ENCODE measurements at regions of chr2 and their contacts with region 1.

Region 1: DNA sequence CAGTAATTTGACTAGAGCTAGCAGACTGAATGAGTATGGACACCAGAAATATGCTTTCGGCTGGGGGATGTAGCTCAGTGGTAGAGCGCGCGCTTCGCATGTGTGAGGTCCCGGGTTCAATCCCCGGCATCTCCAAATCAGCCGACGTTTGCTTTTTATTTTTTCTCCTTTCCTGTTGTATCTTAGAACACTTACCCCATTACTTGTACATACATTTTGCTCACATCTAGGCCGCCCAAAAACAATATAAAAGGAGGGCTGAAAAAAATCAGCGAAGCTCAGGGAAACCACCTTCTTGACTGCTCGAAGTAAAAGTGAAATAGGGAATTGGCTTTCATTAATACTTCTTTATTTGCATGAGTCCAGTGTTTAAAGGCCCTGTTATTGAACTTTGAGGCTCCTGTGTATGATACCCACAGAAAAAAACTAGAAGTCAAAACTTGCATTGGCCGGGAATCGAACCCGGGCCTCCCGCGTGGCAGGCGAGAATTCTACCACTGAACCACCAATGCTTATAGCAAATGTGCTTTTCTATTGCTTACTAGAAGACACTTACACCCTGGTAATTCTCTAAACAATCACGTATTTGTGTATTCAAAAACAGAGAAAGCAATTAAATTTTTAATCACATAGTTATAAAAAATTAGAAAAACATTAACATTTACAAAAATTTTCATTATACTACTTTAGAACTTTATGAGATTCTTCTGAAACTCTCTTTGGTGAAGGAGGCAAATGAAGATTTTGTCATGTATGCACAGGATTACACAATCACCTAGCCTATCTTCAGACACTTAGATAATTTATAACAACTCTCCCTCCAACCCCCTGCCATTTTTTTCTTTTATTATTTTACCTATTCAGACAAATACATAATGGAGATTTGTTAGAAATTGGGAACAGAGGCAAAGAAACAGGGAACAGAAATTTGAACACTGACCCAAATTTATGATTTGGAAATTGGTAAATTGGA is 35.2 kb upstream of the GPD2 start:
- DNase-seq: peak; percentile 75
- H3K4me3 ChIP-seq: peak overlapping the region; percentile 89
- H3K27ac ChIP-seq: peak overlapping the region; percentile 66
- H3K4me1 ChIP-seq: peaks cover 9% of the 10 kb centered on the region
- CTCF ChIP-seq: no peak

Region 2: DNA sequence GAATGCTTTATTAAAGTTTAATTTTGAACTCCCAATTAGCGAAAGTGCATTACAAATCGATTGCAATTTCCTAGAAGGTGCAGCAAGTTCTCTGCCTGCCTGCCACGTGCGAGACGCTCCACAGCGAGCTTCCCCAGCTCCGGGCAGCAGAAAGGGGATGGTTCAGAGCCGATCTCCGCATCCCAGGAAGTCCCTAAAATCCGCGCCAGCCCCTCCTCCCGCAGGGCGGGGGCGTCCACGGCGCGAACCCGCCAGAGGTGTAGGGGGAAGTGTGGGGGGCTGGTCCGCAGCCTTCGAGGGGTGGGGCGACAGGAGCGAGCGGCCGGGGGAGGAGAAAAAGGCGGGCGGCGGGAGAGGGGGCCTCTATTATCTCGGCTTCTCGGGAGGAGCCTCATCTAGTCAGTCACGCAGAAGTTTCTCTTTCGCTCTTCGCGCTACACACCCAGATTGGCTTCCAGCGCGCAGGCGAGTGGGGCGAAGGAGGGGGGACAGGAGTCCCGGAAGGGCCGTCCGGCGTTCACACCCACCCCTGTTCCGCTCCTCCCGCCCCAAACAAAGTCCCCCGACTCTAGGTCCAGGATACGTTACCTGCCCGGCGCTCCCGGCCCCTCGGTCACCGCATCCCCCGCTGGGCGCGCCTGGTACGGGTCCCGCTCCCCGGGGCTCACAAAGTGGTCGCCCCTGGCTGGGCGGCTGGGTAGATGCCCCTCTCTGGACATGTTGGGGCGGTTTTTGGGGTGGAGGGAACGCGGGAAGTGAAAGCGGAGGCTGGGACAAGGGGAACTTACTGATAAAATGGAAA is 59.3 kb before region 1 on chr2:
- CTCF ChIA-PET with region 1: no interaction called
- POLR2A ChIA-PET with region 1: no interaction called
- intact Hi-C with region 1: loop called (anchors 2 kb)
- DNase-seq: peak; percentile 28
- H3K4me3 ChIP-seq: peak overlapping the region; percentile 77
- H3K27ac ChIP-seq: no peak overlapping the region
- H3K4me1 ChIP-seq: peaks cover 14% of the 10 kb centered on the region
- CTCF ChIP-seq: no peak

Region 3: GRCh38 chr2:156435715-156436496 is 34.9 kb after region 1 on chr2 and contains the start of gene GPD2:
- CTCF ChIA-PET with region 1: no interaction called
- POLR2A ChIA-PET with region 1: interaction called, 3 read pairs
- intact Hi-C with region 1: loop called (anchors 2 kb)
- DNase-seq: peak; percentile 39
- H3K4me3 ChIP-seq: peak within 1 kb of the TSS; percentile 67
- H3K27ac ChIP-seq: peak within 1 kb of the TSS; percentile 15
- H3K4me1 ChIP-seq: peaks cover 14% of the 10 kb centered on the region
- CTCF ChIP-seq: no peak
- total RNA-seq, gene GPD2: 6.6 and 6.9 TPM in 2 replicates

Region 4: DNA sequence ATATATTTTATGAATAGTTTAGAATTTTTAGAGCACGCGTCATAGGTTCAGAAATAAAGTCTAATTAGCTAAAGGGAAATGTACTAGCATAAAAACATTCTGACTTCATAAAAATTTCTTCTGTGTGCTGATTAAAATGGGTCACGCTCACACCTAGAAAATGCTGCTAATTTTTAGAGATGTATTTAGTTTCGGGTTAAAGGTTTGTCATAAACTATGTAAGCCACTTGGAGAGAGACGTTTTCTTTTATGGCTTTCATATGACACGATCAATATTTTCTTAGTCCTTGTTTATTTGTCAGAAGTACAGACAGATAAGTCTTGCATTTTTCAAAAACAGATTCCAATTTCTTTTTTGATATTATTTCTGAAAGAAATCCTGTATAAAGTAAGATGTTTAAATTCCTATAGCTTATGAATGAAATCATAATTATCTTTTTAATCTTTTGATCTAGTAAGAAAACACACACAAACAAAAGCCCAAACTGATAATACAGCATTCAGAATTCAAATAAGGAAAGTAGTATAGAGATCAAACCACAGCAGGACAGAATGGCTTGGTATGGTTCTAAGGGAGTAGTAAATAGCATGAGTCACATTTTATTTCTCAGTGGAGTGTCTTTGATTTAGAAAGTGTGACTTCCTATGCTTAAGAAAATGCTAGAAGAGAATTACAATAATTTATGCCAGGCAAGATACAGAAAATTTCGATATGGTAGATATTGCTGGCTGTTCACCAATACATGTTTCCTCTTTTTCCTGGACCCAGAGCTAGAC is 271.8 kb after region 1 on chr2:
- CTCF ChIA-PET with region 1: no interaction called
- POLR2A ChIA-PET with region 1: no interaction called
- intact Hi-C with region 1: no loop called
- DNase-seq: no peak
- H3K4me3 ChIP-seq: no peak overlapping the region
- H3K27ac ChIP-seq: no peak overlapping the region
- H3K4me1 ChIP-seq: no peaks in the 10 kb centered on the region
- CTCF ChIP-seq: no peak